GM18951 (cell line): ENCODE measurements at regions of chr12 and their contacts with region 1.

Region 1: DNA sequence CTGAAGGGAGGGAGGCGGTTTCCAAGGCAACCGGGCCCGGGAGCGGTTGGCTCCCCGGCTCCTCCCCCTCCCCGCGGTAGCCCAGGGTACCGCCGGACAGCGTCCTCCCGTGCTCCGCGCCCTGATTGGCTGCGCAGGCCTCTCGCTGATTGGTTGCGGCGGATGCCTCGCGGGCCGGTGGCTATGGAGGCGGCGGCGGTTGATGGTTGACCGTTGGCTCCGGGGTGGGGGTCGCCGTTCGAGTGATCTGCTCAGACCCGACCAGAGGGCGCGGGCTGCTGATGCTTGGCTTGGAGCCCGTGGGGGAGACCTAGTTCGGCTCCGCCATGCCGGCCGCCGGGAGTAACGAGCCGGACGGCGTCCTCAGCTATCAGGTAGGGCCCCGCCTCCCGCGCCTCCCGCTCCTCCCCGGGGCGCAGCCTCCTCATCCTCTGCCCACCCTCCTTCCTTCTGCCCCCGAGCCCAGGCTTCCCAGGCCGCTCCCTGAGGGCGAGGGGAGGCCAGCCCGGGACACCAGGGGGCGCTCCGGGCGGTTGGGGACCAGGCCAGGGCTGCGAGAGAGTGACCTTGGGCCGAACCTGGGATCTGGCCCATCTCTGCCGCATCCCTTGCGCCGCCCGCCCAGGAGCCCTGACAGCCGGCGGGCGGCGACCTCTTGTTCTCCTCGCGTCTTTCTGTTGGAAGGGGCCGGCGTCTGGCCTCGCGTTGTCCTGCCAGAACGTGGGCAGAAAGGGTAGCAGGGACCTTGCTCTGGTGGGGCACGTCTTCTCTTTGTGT is at the start of gene SLC4A8:
- POLR2A ChIP-seq: peak; percentile 23

Region 2: GRCh38 chr12:51521554-51522276 is 96.9 kb after region 1 on chr12:
- in situ Hi-C with region 1: loop called (anchors 10 kb)
- POLR2A ChIP-seq: no peak